ENCODE measurements at regions of chr13 and their contacts with region 1.

Region 1: GRCh38 chr13:94617389-94618000 is 15.8 kb downstream of the GPR180 start:
- DNase-seq: no peak
- CTCF ChIP-seq: peak; percentile 61

Region 2: DNA sequence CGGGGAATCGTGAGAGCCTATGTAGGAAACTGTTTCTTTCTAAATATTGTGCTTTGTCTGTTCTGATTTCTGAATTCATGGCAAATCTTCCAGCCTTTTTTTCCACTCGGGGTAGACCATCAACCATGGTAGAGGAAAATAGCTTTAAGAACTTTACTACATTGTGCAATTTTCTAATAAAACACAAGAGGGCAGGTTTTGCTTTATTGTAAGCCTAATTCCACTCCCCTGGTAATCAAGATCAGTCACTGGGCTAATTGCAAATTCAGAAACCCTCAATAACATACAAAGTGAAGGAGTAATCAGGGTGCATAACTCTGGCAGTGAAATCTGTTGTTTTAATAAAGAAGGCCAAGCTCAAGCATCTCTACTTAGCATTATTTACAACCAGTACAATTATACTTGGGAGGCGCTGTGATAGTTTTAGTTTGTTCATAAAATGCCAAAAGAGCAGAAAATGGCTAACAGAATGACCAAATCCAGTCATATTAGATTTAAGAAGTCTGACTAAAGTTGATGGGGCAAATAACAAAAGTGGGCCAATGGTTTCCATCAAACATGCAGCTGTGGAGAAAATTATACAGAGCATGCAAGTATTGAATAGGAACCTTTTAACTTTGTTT is 181.8 kb before region 1 on chr13:
- in situ Hi-C with region 1: loop called (anchors 10 kb)
- DNase-seq: peak; percentile 45
- CTCF ChIP-seq: peak; percentile 48